ENCODE measurements at regions of chr17 and their contacts with region 1.

Region 1: DNA sequence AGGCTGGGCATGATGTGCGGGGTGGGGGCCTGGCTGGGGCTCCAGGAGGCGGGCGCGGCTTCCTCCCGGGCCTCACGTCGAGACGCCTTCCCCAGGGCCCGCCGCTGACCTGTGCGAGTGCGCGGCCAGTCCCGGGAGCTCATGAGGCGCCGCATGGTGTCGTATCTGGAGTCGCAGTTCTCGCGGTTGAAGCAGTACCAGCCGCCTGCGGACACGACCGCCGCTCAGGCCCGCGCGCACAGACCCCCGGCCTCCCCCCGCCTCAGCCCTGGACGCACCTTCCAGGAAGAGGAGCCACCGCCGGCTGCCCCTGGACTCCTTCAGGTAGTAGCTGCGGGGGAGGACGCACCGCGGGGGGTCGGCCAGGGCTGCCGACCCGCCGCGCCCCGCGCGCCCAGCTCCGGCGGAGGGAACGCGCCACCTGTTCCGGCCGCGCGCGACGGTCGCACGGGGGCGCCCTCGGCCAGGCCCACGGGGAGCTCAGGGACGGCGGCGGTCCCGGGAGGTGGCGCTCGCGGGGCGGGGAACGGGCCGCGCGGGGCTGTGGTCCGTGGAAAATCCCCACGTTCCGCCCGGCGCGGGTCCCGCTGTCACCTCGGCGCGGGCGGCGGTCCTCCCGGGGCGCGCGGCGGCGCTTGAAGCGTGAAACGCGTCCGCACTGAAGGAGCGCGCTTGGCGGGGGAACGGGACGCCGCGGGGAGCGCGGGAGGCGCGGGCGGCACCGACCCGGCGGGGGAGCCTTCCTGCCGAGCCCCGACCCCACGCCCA is 1.4 kb downstream of the NOTUM start:
- DNase-seq: peak; percentile 76 to 88 (median 84)
- H3K4me3 ChIP-seq: peak overlapping the region in 1 of 2 donors; percentile 37
- H3K4me3 Mint-ChIP-seq: peak overlapping the region in 4 of 8 donors; percentile 45 to 66 (median 58)
- H3K27ac ChIP-seq: no peak overlapping the region
- H3K27ac Mint-ChIP-seq: peak overlapping the region in 1 of 7 donors; percentile 69
- H3K4me1 ChIP-seq: peaks cover 7% of the 10 kb centered on the region
- H3K4me1 Mint-ChIP-seq: peaks cover 0 to 3% (median 0%) of the 10 kb centered on the region in 4 donors
- H3K27me3 ChIP-seq: peaks cover 30% of the 10 kb centered on the region
- H3K27me3 Mint-ChIP-seq: peaks cover 2 to 12% of the 10 kb centered on the region in 2 donors

Region 2: GRCh38 chr17:81931557-81932332 is 27.8 kb before region 1 on chr17:
- CTCF ChIA-PET with region 1: no interaction called
- POLR2A ChIA-PET with region 1: no interaction called
- intact Hi-C with region 1: no loop called
- DNase-seq: no peak
- H3K4me3 ChIP-seq: no peak overlapping the region
- H3K4me3 Mint-ChIP-seq: no peak overlapping the region
- H3K27ac ChIP-seq: no peak overlapping the region
- H3K27ac Mint-ChIP-seq: peak overlapping the region in 1 of 7 donors; percentile 64
- H3K4me1 ChIP-seq: peaks cover 15% of the 10 kb centered on the region
- H3K4me1 Mint-ChIP-seq: peaks cover 0 to 10% (median 3%) of the 10 kb centered on the region in 4 donors
- H3K27me3 ChIP-seq: peaks cover 10% of the 10 kb centered on the region
- H3K27me3 Mint-ChIP-seq: peaks cover 0 to 9% of the 10 kb centered on the region in 2 donors

Region 3: DNA sequence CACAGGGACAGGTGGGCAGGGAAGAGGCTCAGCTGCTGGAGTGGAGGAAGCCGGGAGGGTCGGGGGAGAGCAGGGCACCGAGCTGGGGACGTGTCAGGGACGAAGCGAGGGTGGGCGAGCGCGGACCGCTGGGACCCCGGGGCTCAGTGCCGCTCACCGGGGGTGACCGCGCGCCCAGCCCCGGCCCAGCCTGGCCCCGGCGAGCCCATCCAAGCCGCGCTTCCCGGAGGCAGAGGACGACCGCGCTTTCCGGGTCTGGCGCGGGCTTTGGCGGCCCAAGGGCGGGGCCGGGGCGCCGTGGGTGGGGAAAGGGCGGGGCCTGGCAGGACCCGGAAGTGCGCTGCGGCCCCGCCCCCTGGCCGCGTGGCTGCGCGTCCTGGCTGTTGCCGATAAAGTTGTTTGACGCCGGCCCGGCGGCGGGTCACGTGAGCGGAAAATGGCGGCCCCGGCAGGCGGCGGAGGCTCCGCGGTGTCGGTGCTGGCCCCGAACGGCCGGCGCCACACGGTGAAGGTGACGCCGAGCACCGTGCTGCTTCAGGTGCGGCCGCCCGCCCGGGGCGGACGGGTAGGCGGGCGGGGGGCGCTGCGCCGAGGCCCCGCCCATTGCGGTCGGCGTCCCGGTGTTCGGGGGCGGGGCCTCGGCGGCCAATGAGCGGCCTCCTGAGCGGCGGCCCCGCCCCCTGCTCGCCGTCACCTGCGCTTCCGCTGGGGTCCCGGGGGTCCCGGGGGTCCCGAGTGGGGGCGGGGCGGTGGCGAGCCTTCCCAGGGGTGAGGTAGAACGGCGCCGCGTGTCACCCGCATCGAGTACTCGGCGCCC is 17.9 kb after region 1 on chr17 and contains the start of gene ASPSCR1:
- CTCF ChIA-PET with region 1: interaction called, 6 read pairs
- POLR2A ChIA-PET with region 1: interaction called, 54 read pairs
- intact Hi-C with region 1: no loop called
- DNase-seq: peak; percentile 86 to 95 (median 92)
- H3K4me3 ChIP-seq: peak within 1 kb of the TSS; percentile 69 to 74
- H3K4me3 Mint-ChIP-seq: peak within 1 kb of the TSS; percentile 90 to 98 (median 96)
- H3K27ac ChIP-seq: peak within 1 kb of the TSS; percentile 80
- H3K27ac Mint-ChIP-seq: peak within 1 kb of the TSS; percentile 94 to 99 (median 98)
- H3K4me1 ChIP-seq: peaks cover 31% of the 10 kb centered on the region
- H3K4me1 Mint-ChIP-seq: peaks cover 17 to 43% (median 28%) of the 10 kb centered on the region in 4 donors
- H3K27me3 ChIP-seq: no peaks in the 10 kb centered on the region
- H3K27me3 Mint-ChIP-seq: no peaks in the 10 kb centered on the region
- total RNA-seq, gene ASPSCR1: 40.4 to 40.6 TPM

Region 4: DNA sequence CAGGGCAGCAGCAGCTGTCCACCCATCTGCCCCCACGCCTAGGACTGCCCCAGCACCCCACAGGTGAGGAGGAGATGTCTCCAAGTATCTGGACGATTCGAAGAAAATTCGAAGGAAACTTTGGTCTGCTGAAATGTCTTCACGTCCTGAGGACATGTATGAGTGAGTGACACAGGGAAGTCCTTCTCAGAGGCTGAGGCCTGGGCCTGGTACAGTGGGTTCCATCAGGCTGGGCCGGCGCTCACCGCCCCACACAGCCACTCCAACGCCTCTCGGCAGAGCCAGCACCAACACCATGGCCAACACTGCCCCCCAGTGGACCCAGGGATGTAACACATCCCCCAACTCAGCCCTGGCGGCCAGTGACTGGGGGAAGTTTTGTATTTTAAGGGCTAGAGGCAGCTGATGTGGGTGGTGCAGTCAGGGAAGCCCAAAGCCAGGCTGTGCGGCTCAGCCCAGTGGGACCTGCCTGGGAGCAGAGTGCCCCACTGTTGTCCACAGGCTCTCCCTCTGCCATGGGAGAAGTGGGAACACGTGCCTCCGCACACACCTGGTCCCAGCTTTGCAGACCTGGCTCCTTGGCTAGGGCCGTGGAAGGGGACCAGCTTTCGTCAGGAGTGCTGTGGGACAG is 194.3 kb after region 1 on chr17:
- CTCF ChIA-PET with region 1: interaction called, 6 read pairs
- POLR2A ChIA-PET with region 1: no interaction called
- intact Hi-C with region 1: loop called (anchors 5 kb)
- DNase-seq: peak; percentile 76 to 86 (median 81)
- H3K4me3 ChIP-seq: no peak overlapping the region
- H3K4me3 Mint-ChIP-seq: no peak overlapping the region
- H3K27ac ChIP-seq: no peak overlapping the region
- H3K27ac Mint-ChIP-seq: peak overlapping the region in 6 of 7 donors; percentile 74 to 93 (median 89)
- H3K4me1 ChIP-seq: peaks cover 9% of the 10 kb centered on the region
- H3K4me1 Mint-ChIP-seq: peaks cover 5 to 7% (median 6%) of the 10 kb centered on the region in 4 donors
- H3K27me3 ChIP-seq: no peaks in the 10 kb centered on the region
- H3K27me3 Mint-ChIP-seq: no peaks in the 10 kb centered on the region

Measured in CD4-positive, alpha-beta memory T cell (primary cell).